ENCODE measurements at regions of chr6 and their contacts with region 1.

Region 1: GRCh38 chr6:5115168-5115567 is 30.0 kb downstream of the PPP1R3G start:
- DNase-seq: peak; percentile 25
- H3K4me3 ChIP-seq: no peak overlapping the region
- H3K27ac ChIP-seq: no peak overlapping the region
- H3K4me1 ChIP-seq: no peaks in the 10 kb centered on the region
- H3K27me3 ChIP-seq: no peaks in the 10 kb centered on the region
- CTCF ChIP-seq: peak; percentile 37

Region 2: DNA sequence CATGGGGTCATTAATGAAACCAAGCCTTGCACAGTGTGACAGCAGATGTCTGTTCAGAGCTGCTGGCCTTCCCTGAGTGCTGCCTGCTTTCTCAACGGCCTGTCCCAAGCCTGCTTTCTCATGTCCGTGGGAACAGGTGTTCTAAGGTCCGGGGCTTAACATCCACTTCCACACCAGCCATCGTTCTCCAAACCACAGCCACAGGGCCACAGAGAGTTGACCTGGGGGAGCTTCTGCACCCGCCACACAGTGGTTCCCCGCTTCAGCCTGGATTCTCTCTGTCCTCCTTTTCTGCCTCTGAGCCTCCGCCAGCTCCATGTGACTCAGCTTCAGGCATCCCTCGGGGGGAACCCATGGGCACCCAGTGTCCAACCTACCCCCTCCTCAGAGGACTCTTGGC is 56.9 kb before region 1 on chr6:
- intact Hi-C with region 1: loop called (anchors 5 kb)
- DNase-seq: no peak
- H3K4me3 ChIP-seq: no peak overlapping the region
- H3K27ac ChIP-seq: no peak overlapping the region
- H3K4me1 ChIP-seq: no peaks in the 10 kb centered on the region
- H3K27me3 ChIP-seq: no peaks in the 10 kb centered on the region
- CTCF ChIP-seq: no peak

Measured in colonic mucosa (tissue), 4 donors.